HCT116 (cell line): ENCODE measurements at regions of chr1 and their contacts with region 1.

Region 1: DNA sequence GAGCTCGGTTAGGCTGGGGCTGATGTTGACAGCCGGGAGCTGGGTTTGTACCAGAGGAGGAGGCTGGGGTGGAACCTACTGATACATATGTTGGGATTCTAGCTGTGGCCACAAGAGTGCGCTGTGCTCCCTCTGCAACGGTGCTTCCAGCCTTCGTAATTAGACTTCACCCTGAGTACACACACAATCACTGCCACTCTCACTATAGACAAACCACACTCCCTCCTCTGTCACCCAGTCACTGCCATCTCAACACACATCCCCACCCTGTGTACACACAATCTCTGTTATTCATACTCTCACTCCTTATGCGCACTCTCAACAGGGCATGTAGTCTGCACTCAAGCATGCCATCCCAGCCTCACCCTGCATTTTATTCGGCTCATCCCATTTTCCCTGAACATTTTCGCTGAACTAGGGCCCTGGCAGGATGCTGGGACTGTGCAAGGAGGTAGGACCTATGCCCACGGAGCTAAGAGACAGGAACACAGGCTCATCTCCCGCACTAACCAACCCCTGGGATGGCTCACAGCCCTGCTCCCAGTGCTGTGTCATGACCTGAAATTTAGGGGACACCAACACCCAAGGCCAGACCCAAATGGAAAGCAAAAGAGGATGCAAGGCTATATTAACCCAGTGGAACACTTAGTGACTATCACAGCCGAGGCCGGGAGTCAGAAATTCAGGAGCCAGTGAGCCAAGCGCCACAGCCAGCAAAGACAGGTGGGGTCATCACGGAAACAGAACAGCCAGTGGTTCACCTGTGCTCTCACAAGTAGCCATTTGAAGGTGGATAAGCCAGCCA is 5.7 kb downstream of the GJB3 start:
- DNase-seq: no peak
- ATAC-seq: peak; percentile 56
- H3K4me3 ChIP-seq: no peak overlapping the region
- H3K27ac ChIP-seq: no peak overlapping the region
- H3K4me1 ChIP-seq: peaks cover 20 to 39% of the 10 kb centered on the region in 2 experiments
- H3K27me3 ChIP-seq: no peaks in the 10 kb centered on the region
- CTCF ChIP-seq: peak in 2 of 3 experiments; percentile 81 to 87; a peak in 4 of 6 replicates
- POLR2A ChIP-seq: no peak
- RAD21 ChIP-seq: no peak

Region 2: DNA sequence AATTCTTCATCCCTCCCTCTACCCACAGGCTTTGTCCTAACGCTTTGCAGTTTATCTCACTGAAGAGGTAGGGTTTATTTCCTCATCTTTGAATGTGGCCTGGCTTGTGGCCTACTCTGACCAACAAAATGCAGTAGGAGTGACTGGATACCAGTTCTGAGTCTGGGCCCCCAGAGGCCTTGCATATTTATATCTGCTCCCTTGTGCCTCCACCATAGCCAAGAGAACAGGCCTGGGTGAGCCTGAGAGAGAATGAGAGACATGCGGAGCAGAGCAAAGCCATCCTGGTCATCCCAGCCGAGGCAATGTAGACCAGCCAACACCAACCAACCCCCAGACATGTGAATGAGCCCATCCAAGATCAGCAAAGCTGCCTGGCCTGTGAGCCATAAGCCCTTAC is 42.5 kb after region 1 on chr1:
- CTCF ChIA-PET with region 1: no interaction called
- POLR2A ChIA-PET with region 1: no interaction called
- RAD21 ChIA-PET with region 1: no interaction called
- intact Hi-C with region 1: no loop called
- DNase-seq: no peak
- ATAC-seq: no peak
- H3K4me3 ChIP-seq: no peak overlapping the region
- H3K27ac ChIP-seq: no peak overlapping the region
- H3K4me1 ChIP-seq: no peaks in the 10 kb centered on the region
- H3K27me3 ChIP-seq: peaks cover 6% of the 10 kb centered on the region; the same call in 1 of the 2 replicates
- CTCF ChIP-seq: no peak
- POLR2A ChIP-seq: no peak
- RAD21 ChIP-seq: no peak

Region 3: GRCh38 chr1:34844252-34844634 is 57.5 kb after region 1 on chr1:
- CTCF ChIA-PET with region 1: no interaction called
- POLR2A ChIA-PET with region 1: no interaction called
- RAD21 ChIA-PET with region 1: no interaction called
- intact Hi-C with region 1: no loop called
- DNase-seq: no peak
- ATAC-seq: no peak
- H3K4me3 ChIP-seq: no peak overlapping the region
- H3K27ac ChIP-seq: no peak overlapping the region
- H3K4me1 ChIP-seq: no peaks in the 10 kb centered on the region
- H3K27me3 ChIP-seq: no peaks in the 10 kb centered on the region
- CTCF ChIP-seq: no peak
- POLR2A ChIP-seq: no peak
- RAD21 ChIP-seq: no peak

Region 4: DNA sequence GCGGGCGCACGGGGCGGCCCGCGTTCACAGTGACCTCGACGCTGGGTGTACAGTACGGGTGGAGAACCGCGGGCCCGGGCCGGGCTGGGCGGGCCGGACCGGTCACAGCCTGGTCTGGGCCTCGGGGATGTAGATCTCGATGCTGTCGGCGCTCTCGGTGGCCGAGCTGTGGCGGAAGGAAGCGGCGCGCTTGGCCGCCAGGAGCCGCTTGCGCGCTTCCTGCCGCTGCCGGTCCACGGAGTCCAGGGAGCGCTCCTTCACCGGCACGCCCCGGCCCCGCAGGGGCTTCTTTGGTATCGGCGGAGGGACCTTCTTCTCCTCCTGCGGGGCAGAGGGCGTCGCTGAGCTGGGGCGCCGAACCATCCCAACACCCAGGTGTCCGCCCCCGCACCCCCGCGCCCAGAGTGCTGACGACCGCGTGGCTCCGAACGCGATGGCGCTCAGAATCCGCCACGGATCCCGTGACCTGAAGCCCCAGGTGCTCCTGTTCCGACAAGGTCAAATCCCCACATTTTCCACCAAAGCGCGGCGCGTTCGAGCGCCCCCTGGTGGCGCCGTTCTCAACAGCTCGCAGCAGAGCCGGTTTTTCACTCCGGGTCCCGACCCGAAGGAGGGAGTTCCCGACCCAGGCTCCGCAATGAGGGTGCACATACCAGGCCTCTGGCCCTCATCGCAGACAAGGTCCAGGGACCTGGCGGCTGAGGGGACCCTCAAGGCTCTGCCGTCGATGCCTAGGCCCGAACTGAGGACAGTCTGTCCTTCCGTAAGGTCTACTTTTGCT is 79.4 kb after region 1 on chr1:
- CTCF ChIA-PET with region 1: interaction called, 8 read pairs
- POLR2A ChIA-PET with region 1: no interaction called
- RAD21 ChIA-PET with region 1: no interaction called
- intact Hi-C with region 1: loop called (anchors 1 kb)
- DNase-seq: peak; percentile 37
- ATAC-seq: peak; percentile 87
- H3K4me3 ChIP-seq: peak overlapping the region; percentile 28 to 51
- H3K27ac ChIP-seq: no peak overlapping the region; the same call in 1 of the 2 replicates
- H3K4me1 ChIP-seq: peaks cover 0 to 8% of the 10 kb centered on the region in 2 experiments; a peak in 2 of 4 replicates
- H3K27me3 ChIP-seq: peaks cover 2% of the 10 kb centered on the region; the same call in 1 of the 2 replicates
- CTCF ChIP-seq: peak; percentile 89 to 97 (median 93)
- POLR2A ChIP-seq: no peak
- RAD21 ChIP-seq: peak; percentile 55